T-cell (primary cell): ENCODE measurements at regions of chr17 and their contacts with region 1.

Region 1: DNA sequence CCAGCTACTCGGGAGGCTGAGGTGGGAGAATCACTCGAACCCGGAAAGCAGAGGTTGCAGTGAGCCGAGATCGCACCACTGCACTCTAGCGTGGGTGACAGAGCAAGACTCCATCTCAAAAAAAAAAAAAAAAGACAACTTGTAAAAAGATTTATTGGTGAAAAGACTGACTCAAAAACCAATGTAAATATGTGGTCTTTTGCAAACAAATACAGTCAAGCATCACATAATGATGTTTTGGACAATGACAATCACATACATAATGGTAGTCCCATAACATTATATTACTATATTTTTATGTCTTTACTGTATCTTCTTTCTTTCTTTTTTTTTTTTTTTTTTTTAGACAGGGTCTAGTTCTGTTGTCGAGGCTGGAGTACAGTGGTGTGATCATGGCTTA is 8.3 kb downstream of the CRLF3 start:
- DNase-seq: no peak
- ATAC-seq: no peak
- H3K4me3 ChIP-seq: no peak overlapping the region
- H3K4me3 Mint-ChIP-seq: peak overlapping the region in 1 of 3 donors; percentile 93
- H3K27ac ChIP-seq: no peak overlapping the region
- H3K27ac Mint-ChIP-seq: peak overlapping the region; percentile 74 to 79
- H3K4me1 ChIP-seq: peaks cover 57 to 79% of the 10 kb centered on the region in 2 experiments
- H3K4me1 Mint-ChIP-seq: peaks cover 62 to 75% (median 72%) of the 10 kb centered on the region in 3 donors
- H3K27me3 ChIP-seq: no peaks in the 10 kb centered on the region
- H3K27me3 Mint-ChIP-seq: no peaks in the 10 kb centered on the region

Region 2: GRCh38 chr17:29384900-29385299 is 1431.3 kb before region 1 on chr17:
- CTCF ChIA-PET with region 1: no interaction called
- POLR2A ChIA-PET with region 1: interaction called in 1 of 2 experiments, 10 read pairs
- DNase-seq: no peak
- ATAC-seq: no peak
- H3K4me3 ChIP-seq: no peak overlapping the region
- H3K4me3 Mint-ChIP-seq: no peak overlapping the region
- H3K27ac ChIP-seq: no peak overlapping the region
- H3K27ac Mint-ChIP-seq: no peak overlapping the region
- H3K4me1 ChIP-seq: peaks cover 3 to 5% of the 10 kb centered on the region in 2 experiments
- H3K4me1 Mint-ChIP-seq: peaks cover 5 to 7% (median 6%) of the 10 kb centered on the region in 3 donors
- H3K27me3 ChIP-seq: no peaks in the 10 kb centered on the region
- H3K27me3 Mint-ChIP-seq: no peaks in the 10 kb centered on the region

Region 3: GRCh38 chr17:30969989-30970830 is 154.0 kb after region 1 on chr17:
- CTCF ChIA-PET with region 1: no interaction called
- POLR2A ChIA-PET with region 1: no interaction called
- DNase-seq: peak in 15 of 35 experiments; percentile 4 to 63 (median 27)
- ATAC-seq: peak in 2 of 4 experiments; percentile 28 to 51
- H3K4me3 ChIP-seq: peak overlapping the region; percentile 76 to 90
- H3K4me3 Mint-ChIP-seq: peak overlapping the region; percentile 90 to 97 (median 94)
- H3K27ac ChIP-seq: peak overlapping the region; percentile 49
- H3K27ac Mint-ChIP-seq: peak overlapping the region; percentile 86 to 88
- H3K4me1 ChIP-seq: peaks cover 0 to 25% of the 10 kb centered on the region in 2 experiments
- H3K4me1 Mint-ChIP-seq: peaks cover 24 to 35% (median 27%) of the 10 kb centered on the region in 3 donors
- H3K27me3 ChIP-seq: peaks cover 0 to 14% of the 10 kb centered on the region in 2 experiments
- H3K27me3 Mint-ChIP-seq: peaks cover 0 to 3% of the 10 kb centered on the region in 2 donors

Region 4: DNA sequence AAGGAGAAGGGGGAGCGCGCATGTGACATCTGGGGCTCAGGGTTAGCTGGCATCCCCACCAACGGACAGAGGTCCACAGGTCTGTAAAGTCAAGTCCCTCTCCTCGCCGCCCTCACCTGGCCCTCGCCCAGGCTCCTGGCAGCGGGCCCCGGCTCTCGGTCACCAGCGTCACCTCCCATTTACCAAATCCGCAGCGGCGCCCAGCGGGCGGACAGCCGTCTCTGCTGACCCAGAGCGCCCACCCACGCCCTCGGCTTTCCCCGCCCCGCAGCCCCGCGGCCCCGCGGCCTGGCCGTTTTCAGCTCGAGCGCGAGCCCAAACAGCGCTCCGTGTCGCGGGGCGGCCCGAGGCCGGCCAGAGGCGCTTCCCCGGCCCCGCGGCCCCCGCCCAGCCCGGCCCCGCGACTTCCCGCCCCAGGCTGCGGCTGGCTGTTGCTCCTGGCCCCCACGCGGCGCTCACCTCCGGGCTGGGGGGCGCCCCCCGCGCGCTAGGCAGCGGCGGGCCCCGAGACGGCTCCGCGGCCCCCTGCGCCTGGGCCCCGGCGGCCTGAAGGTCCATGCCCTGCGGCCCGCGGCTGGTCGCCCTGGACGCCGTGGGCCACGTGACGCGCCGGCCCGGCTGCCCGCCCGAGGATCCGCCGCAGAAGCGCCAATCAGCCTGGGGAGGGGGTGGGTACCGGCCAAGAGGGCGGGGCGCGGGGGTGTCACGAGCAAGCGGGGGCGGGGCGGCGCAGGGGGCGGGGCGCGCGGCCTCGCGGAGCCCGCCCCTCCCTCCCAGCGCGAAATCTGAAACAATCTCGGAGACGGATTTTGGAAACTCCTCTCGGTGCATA is 1042.7 kb after region 1 on chr17 and contains the start of gene COPRS:
- CTCF ChIA-PET with region 1: interaction called in 1 of 2 experiments, 11 read pairs
- POLR2A ChIA-PET with region 1: no interaction called
- DNase-seq: peak; percentile 46 to 85 (median 70)
- ATAC-seq: peak; percentile 88 to 89 (median 88)
- H3K4me3 ChIP-seq: peak within 1 kb of the TSS; percentile 48 to 55
- H3K4me3 Mint-ChIP-seq: peak within 1 kb of the TSS; percentile 81 to 84 (median 84)
- H3K27ac ChIP-seq: no peak within 1 kb of the TSS
- H3K27ac Mint-ChIP-seq: peak within 1 kb of the TSS; percentile 50 to 74
- H3K4me1 ChIP-seq: peaks cover 2 to 14% of the 10 kb centered on the region in 2 experiments
- H3K4me1 Mint-ChIP-seq: peaks cover 16 to 18% (median 17%) of the 10 kb centered on the region in 3 donors
- H3K27me3 ChIP-seq: no peaks in the 10 kb centered on the region
- H3K27me3 Mint-ChIP-seq: no peaks in the 10 kb centered on the region
- total RNA-seq, gene COPRS: 2.1 to 6.7 (median 5.1) TPM